ENCODE measurements at regions of chr17 and their contacts with region 1.

Region 1: GRCh38 chr17:28494445-28495188 is 11.5 kb upstream of the FOXN1 start:
- DNase-seq: peak; percentile 55 to 78
- ATAC-seq: peak; percentile 68 to 84 (median 80)
- H3K4me3 ChIP-seq: no peak overlapping the region
- H3K27ac ChIP-seq: no peak overlapping the region
- H3K4me1 ChIP-seq: no peaks in the 10 kb centered on the region
- H3K27me3 ChIP-seq: peaks cover 0 to 27% (median 3%) of the 10 kb centered on the region in 7 donors
- CTCF ChIP-seq: peak; percentile 76 to 89 (median 84)

Region 2: GRCh38 chr17:28426081-28426519 is 68.5 kb before region 1 on chr17:
- intact Hi-C with region 1: loop called in 1 of 10 experiments (anchors 10 kb)
- DNase-seq: no peak
- ATAC-seq: no peak
- H3K4me3 ChIP-seq: no peak overlapping the region
- H3K27ac ChIP-seq: no peak overlapping the region
- H3K4me1 ChIP-seq: no peaks in the 10 kb centered on the region
- H3K27me3 ChIP-seq: peaks cover 0 to 7% (median 0%) of the 10 kb centered on the region in 7 donors
- CTCF ChIP-seq: peak in 3 of 9 donors; percentile 6 to 30 (median 18)

Region 3: GRCh38 chr17:28540231-28540630 is 45.6 kb after region 1 on chr17:
- intact Hi-C with region 1: loop called in 8 of 10 experiments (anchors 2 to 5 kb)
- DNase-seq: no peak
- ATAC-seq: peak in 1 of 8 donors; percentile 9
- H3K4me3 ChIP-seq: no peak overlapping the region
- H3K27ac ChIP-seq: no peak overlapping the region
- H3K4me1 ChIP-seq: no peaks in the 10 kb centered on the region
- H3K27me3 ChIP-seq: no peaks in the 10 kb centered on the region
- CTCF ChIP-seq: no peak

Region 4: GRCh38 chr17:28612936-28613872 is 118.6 kb after region 1 on chr17:
- intact Hi-C with region 1: loop called (anchors 1 to 5 kb)
- DNase-seq: peak in 1 of 2 donors; percentile 37
- ATAC-seq: peak in 6 of 8 donors; percentile 25 to 62 (median 44)
- H3K4me3 ChIP-seq: no peak overlapping the region
- H3K27ac ChIP-seq: no peak overlapping the region
- H3K4me1 ChIP-seq: no peaks in the 10 kb centered on the region
- H3K27me3 ChIP-seq: no peaks in the 10 kb centered on the region
- CTCF ChIP-seq: peak; percentile 43 to 77 (median 71)

Measured in heart right ventricle (tissue), 16 donors.